A673 (cell line): ENCODE measurements at regions of chr11 and their contacts with region 1.

Region 1: DNA sequence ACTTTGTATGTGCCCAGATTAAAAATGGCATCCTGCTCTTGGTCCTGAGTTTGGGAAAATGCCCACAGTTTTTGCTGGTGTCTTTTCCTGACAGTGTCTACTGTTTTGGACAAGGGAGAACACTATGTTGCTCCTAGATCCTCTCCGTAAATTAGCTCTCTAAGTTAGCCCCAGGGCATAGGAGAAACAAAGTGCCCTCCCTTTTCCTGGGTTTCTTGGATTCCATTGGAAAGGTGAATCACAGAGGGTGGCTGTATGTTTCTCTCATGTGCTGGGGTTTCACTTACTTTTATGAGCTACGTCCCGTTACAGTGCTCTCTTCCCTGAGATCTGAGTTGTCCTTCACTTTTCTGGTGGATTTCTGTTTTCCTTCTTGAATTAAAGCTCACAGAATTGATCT is 782.8 kb downstream of the CNTN5 start:
- DNase-seq: no peak
- H3K4me3 ChIP-seq: no peak overlapping the region
- H3K27ac ChIP-seq: no peak overlapping the region
- H3K4me1 ChIP-seq: no peaks in the 10 kb centered on the region
- H3K27me3 ChIP-seq: no peaks in the 10 kb centered on the region
- CTCF ChIP-seq: no peak

Region 2: DNA sequence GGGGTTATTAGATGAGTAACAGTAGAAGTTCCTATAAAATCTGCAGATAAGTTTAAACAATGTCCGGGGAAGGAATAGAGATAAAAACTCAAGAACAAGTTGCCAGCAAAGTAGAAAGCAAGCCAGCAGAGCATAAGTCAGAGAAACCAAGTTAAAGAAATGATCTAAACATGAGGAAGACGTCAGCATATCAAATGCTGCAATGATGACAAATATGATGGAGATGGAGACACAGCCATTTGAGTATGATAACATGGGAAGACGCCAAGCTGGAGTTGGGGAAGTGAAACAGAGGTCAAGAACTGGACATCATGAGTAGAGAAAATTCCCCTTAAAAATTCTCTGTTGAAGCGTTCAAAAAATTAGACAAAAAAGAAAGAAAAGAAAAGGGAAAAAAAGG is 211.2 kb before region 1 on chr11:
- CTCF ChIA-PET with region 1: interaction called, 13 read pairs
- POLR2A ChIA-PET with region 1: no interaction called
- intact Hi-C with region 1: no loop called
- DNase-seq: no peak
- H3K4me3 ChIP-seq: no peak overlapping the region
- H3K27ac ChIP-seq: no peak overlapping the region
- H3K4me1 ChIP-seq: no peaks in the 10 kb centered on the region
- H3K27me3 ChIP-seq: no peaks in the 10 kb centered on the region
- CTCF ChIP-seq: no peak